Left ventricle myocardium superior (tissue), 1 donor: ENCODE measurements at regions of chr9 and their contacts with region 1.

Region 1: GRCh38 chr9:18143028-18143745 is 330.8 kb upstream of the ADAMTSL1 start:
- DNase-seq: no peak
- ATAC-seq: no peak

Region 2: GRCh38 chr9:17810728-17811571 is 332.2 kb before region 1 on chr9:
- intact Hi-C with region 1: loop called (anchors 10 kb)
- DNase-seq: no peak
- ATAC-seq: peak; percentile 39